GM23248 (cell line): ENCODE measurements at regions of chr16 and their contacts with region 1.

Region 1: DNA sequence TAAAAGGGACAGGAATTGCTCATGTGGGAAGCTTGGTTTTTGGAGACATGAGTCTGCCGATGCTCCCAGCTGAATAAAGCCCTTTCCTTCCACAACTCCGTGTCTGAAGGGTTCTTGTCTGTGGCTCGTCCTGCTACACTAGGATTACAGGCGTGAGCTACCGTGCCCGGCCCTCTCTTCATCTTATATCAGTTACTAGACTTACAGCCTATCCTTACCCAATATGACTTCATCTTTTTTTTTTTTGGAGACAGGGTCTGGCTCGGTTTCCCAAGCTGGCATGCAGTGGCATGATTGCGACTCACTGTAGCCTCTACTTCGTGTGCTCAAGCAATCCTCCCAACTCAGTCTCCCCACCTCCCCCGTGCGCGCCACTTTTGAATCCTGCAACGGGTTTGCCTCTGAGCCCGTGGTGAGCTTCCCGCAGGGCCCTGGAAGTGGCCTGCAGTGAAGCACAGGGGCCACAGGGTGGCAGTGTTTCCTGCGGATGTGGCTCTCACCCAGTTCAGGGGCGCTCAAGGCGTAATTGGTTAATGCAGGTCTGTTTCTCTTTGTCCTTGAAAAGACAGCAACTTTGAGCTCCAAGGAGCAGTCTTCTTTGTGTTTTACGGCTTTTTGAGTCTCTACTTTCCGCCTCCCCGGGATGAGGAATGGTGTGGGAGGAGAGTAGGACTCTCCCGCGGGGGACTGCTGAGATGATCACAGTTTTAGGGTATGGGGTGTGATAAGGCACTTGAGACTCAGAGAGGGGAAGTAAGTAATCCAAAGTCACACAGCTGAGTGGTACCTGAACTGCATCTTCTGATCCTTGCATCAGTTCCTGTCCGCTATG is 22.7 kb upstream of the GPRC5B start:
- DNase-seq: peak; percentile 74
- H3K4me3 ChIP-seq: no peak overlapping the region
- H3K27ac ChIP-seq: no peak overlapping the region
- H3K4me1 ChIP-seq: no peaks in the 10 kb centered on the region
- H3K27me3 ChIP-seq: no peaks in the 10 kb centered on the region

Region 2: DNA sequence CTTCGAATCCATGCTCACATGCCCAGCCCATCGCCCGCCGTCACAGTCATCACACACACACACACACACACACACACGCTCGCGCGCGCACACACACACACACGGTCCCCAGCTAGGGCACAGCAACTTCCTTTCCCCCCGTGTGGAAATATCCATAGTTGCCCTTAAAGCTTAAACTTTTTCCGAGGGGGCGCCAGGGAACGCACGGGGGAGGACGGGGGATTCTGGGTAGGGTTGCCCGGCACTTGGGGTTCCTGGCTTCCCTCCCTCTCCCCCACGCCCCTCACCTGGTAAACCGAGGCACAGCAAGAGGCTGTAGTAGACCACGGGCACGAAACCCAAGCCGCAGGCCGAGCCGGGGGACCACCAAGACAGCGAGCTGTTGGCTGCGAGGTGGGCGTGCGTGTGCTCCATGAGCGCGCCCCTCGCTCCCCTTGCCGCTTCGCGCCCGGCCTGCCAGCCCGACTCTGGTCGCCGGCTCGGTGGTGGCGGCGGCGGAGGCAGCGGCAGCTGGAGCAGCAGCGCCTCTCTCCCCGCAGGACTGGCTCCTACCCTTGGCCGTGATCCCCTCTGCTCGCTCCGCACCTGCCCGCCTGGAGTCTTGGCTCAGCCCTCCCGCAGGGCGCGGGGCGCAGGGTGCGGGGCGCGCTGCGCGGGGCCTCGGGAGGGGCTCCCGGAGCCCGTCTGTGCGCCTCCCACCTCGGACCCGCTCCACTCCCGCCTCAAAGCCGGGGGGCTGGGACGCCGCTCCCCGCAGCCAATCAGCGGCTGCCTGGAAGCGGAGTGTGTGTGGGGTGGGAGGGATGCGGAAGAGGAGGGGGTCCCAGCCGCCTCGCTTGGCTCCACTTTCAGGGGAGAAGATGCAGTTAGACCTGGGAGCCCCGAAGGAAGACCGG is 166.1 kb after region 1 on chr16 and contains the start of gene GPR139:
- in situ Hi-C with region 1: no loop called
- DNase-seq: no peak
- H3K4me3 ChIP-seq: no peak within 1 kb of the TSS
- H3K27ac ChIP-seq: no peak within 1 kb of the TSS
- H3K4me1 ChIP-seq: no peaks in the 10 kb centered on the region
- H3K27me3 ChIP-seq: no peaks in the 10 kb centered on the region; the same call in 1 of the 2 replicates
- total RNA-seq, gene GPR139: not detected in 2 replicates

Region 3: GRCh38 chr16:20291208-20292206 is 384.1 kb after region 1 on chr16:
- in situ Hi-C with region 1: loop called (anchors 10 kb)
- DNase-seq: no peak
- H3K4me3 ChIP-seq: no peak overlapping the region
- H3K27ac ChIP-seq: no peak overlapping the region
- H3K4me1 ChIP-seq: no peaks in the 10 kb centered on the region
- H3K27me3 ChIP-seq: no peaks in the 10 kb centered on the region

Region 4: DNA sequence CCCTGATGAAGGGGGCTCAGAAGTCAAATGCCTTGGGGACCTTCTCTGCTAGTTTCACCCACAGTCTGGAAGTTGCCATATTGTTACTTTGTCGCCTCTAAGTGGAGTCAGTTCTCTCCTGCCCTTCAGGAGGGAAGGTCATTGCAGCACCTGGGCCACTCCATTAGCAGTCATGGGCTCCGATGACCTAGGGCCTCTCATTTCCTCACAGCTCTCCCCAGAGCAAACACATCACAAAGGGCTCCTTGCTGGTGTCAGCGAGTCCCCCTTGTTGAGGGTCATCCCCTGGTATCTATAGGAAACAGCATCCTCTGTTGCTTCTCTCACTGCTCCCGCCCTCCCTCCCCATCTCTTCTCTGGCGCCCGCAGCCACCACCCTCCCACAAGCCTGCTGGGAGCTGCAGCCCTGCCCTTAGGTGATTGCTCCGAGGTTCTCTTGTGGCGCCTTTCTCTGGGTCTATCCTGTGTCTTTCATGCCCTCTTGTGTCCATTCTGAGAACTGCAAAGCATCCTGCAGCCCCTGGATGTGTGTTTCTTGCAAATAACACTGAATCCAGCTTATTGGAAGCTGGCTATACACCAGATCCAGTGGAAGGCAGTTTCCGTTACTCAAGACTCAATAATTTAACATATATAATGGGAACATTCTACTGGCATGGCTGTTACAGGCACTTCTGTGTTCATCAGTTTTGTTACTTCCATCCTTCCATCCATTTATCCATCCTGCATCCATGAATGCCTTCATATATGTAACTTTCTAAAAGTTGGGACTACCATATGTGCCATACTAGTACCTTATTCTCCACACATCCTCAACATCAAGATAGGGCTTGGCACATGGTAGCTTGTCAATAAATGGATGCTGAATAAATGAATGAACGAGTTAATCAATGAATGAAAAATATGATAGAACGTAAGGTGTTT is 476.0 kb after region 1 on chr16:
- in situ Hi-C with region 1: loop called (anchors 5 kb)
- DNase-seq: peak; percentile 72
- H3K4me3 ChIP-seq: no peak overlapping the region
- H3K27ac ChIP-seq: no peak overlapping the region
- H3K4me1 ChIP-seq: no peaks in the 10 kb centered on the region
- H3K27me3 ChIP-seq: no peaks in the 10 kb centered on the region